Right ventricle myocardium inferior (tissue), 1 donor: ENCODE measurements at regions of chr10 and their contacts with region 1.

Region 1: DNA sequence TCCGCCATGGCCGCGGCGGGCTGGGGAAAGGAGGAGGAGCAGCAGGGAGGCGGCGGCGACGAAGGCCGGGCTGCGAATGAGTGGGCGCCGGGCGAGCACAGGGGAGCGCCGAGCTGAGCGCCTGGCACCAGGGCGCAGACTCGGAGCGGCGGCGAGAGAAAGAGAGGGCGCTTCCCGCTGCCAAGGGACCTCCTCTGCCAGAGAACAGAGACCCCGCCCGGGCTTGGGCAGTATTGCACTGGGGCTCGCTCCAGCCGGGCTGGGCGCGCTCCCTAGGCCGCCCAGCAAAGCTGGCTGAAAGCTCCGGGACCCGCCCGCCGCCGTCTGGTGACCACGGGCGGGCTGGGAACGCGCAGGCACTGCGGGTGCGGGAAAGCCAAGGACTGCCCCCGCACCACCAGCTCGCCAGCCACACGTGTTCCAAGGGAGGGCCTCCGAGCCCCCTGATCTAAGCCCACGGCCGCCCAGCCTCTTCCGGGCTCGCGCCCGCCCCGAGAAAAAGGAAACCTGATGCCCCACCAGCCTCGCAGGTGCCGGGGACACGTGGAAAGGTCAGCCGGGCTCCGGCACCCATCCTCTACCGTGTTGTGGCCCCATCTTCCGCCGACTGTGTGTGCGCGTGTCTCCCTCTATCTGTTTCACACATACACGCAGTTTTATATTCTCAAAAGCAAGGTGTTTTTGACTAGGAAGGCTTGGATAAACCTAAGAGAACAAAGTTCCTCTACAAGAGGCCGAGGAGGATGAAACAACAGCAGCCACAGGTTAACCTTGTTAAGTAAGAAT is at the start of gene CCDC6:
- DNase-seq: peak; percentile 95
- ATAC-seq: peak; percentile 96
- total RNA-seq, gene CCDC6: 16.2 TPM

Region 2: DNA sequence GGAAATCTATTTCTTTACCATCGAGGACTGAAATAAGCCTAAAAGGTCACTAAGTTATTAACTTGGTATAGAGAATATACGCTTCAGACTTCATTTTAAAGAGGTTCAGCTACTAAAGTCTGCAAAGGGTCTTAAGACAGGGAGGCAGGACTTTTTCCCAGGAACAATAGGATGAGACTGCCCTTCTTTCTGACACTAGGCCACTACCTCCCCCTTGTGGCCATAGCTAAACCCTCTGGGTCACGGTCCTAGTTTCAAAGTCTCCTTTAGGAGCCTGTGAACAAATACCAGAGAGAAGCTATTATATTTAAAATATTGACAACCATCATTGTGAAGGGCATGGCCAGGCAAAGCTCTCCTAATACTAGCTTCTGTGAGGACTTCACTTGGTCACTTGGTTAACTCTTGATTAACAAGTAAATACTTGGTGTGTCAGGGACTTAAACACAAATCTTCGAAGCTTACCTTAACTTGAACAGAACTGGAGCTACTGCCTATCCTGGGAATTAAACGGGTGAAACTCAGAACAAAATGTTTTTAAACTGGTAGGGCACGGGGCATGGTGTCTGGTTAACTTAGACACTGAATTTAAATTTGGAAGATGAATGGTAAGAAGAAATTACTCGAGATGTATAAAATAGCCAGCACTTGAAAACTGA is 75.9 kb before region 1 on chr10:
- intact Hi-C with region 1: loop called (anchors 5 kb)
- DNase-seq: no peak
- ATAC-seq: peak; percentile 41

Region 3: DNA sequence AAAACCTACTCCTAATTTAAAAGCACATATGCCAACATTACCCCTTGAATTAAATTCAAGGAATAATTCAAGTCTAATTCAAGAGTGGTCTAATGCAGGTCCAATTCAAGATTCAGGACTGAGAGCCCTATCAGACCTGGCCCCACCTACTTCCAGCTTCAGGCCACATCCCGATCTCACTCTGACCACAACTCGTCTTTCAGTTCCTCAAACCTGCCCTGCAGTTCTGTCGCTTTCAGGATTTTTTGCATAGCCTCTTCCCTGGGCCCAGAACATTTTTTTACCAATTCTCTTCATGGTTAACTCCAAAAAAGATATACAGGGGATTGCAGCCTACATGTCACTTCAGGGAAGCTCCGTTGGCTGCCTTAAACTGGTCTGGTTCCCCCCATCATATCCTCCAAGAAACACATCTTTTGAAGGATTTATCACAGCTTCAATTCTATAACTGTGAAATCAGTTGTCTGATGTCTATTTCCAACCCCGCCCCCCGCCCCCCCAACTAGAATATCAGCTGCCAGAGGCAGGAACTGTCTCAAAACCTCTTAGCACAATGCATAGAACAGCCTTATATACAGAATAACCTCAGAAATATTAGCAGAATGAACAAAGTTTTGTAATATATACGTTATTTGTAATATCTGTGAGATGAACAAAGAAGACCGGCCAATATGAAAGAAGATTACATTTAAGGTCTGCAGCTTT is 21.0 kb before region 1 on chr10:
- intact Hi-C with region 1: no loop called
- DNase-seq: no peak
- ATAC-seq: no peak

Region 4: GRCh38 chr10:60434418-60435046 is 527.9 kb after region 1 on chr10:
- intact Hi-C with region 1: no loop called
- DNase-seq: no peak
- ATAC-seq: peak; percentile 64